ENCODE measurements at regions of chrX and their contacts with region 1.

Region 1: DNA sequence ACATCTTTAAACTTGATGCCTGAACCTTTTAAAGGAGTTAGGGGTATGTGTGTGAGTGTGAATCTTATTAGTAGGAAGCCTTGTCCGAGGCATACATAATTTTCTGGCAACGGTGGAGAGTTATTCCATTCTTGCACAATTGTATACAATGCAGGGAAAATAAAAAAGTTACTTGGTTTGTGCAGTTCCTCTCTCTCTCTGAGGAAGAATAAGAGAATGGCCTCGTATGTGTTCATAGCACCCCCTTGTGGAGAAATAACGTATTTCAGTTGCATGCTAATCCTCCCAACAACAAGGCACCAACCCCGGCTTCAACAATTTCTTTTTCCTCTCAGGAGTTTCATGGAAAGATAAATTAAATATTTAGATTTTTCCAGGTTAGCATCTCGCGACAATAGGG is 33.7 kb upstream of the FGF13 start:
- DNase-seq: no peak
- ATAC-seq: no peak

Region 2: GRCh38 chrX:138128027-138128671 is 617.0 kb before region 1 on chrX:
- intact Hi-C with region 1: loop called (anchors 5 kb)
- DNase-seq: no peak
- ATAC-seq: no peak

Region 3: GRCh38 chrX:138191998-138192397 is 553.2 kb before region 1 on chrX:
- intact Hi-C with region 1: loop called (anchors 10 kb)
- DNase-seq: no peak
- ATAC-seq: no peak

Region 4: DNA sequence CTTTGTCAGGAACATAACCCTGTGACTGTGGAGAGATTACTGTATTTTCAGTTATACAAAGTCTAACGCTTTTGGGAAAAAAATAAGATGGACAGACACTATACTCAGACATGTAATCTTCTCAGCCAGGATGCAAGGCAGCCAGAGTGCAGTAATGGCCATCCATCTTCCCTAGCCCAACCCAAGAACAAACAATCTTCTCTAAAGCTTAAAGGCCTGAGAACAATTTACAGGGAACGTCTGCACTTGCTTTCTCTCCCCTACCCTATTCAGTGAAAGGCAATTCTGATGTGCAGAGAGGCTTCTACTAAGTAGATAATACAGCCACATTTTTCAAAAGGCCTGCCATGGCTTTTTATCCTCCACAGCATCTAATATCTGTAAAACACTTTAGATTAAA is 504.9 kb before region 1 on chrX:
- intact Hi-C with region 1: no loop called
- DNase-seq: no peak
- ATAC-seq: no peak

Region 5: GRCh38 chrX:138408101-138408500 is 337.1 kb before region 1 on chrX:
- intact Hi-C with region 1: no loop called
- DNase-seq: no peak
- ATAC-seq: no peak